AG04450 (cell line): ENCODE measurements at regions of chr20 and their contacts with region 1.

Region 1: DNA sequence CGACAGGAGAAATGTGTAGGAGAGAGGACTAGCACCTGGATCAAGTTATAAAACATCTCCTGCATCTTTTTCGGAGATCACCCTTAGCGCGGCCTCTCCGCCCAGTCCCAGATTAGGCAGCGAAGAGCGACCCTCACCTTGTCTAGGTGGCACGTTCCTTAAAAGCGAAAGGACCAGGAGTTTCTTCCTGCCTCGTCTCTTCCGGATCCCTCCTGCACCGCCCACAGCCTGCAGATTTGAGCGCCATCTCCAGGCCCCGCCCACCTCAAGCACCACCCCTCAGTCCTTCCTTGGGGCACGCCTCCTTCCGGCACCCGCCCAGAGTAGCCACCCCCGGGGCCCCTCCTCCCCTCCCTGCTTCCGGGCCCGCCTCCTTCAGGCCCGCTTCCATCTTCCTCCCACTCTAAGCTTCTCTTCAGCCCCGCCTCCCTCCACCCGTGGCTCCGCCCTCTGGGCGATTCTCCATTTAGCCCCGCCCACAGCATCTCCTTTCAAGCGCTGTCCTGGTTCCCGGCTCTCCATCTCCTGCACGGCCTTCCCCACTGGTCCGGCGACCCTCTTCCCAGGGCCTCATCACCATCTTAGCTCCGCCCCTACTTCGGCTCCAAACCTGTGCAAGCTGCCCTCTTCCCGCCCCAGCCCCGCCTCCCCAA is 662 bp upstream of the RALY start:
- DNase-seq: peak; percentile 99
- H3K4me3 ChIP-seq: peak overlapping the region; percentile 93
- H3K27ac ChIP-seq: peak overlapping the region; percentile 95
- H3K27me3 ChIP-seq: no peaks in the 10 kb centered on the region
- CTCF ChIP-seq: no peak

Region 2: GRCh38 chr20:33810885-33811777 is 181.9 kb before region 1 on chr20 and contains the start of gene CHMP4B:
- CTCF ChIA-PET with region 1: no interaction called
- POLR2A ChIA-PET with region 1: interaction called, 11 read pairs
- DNase-seq: peak; percentile 95
- H3K4me3 ChIP-seq: peak within 1 kb of the TSS; percentile 99
- H3K27ac ChIP-seq: peak within 1 kb of the TSS; percentile 100
- H3K27me3 ChIP-seq: no peaks in the 10 kb centered on the region
- CTCF ChIP-seq: no peak
- polyA plus RNA-seq, gene CHMP4B: 92.4 and 97.4 TPM in 2 replicates

Region 3: DNA sequence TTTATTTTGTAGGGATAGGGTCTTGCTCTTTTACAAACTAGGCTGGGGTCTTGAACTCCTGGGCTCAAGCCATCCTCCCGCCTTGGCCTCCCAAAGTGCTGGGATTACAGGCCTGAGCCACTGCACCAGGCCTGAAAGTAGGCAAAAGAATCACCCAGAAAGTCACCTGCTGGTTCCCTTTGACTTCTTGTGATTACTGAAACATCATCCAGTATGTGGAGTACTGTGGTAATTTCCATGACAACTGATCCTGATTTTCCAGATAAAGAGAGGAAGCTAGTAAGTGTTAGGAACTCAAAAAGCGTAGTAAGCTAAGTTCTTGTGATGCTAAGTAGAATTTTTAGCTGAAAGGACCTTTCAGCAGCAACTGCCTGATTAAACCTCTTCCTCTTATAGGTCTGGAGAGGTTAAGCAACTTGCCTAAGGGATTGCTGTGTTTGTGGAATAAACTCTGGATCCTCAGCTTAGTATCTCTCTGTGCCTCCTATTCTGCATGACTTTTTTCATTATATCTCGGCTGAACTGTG is 17.4 kb after region 1 on chr20:
- CTCF ChIA-PET with region 1: no interaction called
- POLR2A ChIA-PET with region 1: interaction called, 20 read pairs
- DNase-seq: no peak
- H3K4me3 ChIP-seq: no peak overlapping the region
- H3K27ac ChIP-seq: no peak overlapping the region
- H3K27me3 ChIP-seq: no peaks in the 10 kb centered on the region
- CTCF ChIP-seq: no peak

Region 4: DNA sequence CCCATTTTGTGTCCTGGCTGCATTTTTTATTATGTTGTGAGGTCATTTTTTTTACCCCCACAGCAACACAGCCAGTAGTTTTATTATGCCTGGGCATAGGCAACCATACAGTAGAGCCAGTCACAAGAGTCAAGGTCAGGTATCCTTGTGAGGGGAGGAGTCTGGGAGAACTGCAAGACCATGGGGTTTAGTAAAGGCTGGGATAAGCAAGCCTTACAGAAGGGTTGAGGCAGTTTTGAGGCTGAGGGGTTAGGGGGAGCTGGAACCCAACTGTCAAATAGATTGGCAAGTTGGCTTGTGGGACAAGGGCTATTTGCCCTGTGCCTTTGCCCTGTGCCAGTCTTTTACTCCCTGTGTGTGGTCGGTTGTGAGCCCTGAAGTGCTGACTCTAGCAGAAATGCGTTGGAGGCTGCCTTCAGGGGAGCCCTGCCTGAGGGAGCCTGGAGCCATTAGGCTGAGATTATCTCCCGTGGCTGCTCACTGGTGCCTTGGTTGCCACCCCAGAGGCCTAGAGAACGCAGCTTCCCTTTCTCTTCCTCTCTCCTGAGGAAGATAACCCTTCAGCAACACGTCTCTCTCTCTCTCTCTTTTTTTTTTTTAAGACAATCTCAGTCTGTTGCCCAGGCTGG is 31.8 kb after region 1 on chr20:
- CTCF ChIA-PET with region 1: no interaction called
- POLR2A ChIA-PET with region 1: interaction called, 16 read pairs
- DNase-seq: no peak
- H3K4me3 ChIP-seq: no peak overlapping the region
- H3K27ac ChIP-seq: no peak overlapping the region
- H3K27me3 ChIP-seq: no peaks in the 10 kb centered on the region
- CTCF ChIP-seq: no peak

Region 5: DNA sequence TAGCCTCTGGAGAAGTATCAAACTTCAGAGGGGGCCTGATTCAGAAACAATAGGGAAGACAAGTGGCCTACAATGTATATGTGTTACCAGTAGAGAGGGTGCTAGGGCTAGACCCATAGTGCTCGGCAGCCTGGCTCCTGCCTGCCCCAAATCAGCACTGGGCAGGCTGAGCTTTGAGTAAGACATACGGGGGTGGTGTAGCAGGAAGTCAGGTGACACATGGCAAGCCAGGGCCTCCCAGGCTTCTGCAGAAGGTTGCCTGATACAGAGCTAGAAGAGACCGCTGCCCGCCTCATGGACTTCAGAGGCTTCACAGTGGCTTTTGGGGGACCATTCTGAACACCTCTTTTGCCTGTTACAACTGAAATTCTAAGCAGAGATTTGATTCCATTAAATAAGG is 44.1 kb after region 1 on chr20:
- CTCF ChIA-PET with region 1: no interaction called
- POLR2A ChIA-PET with region 1: interaction called, 21 read pairs
- DNase-seq: no peak
- H3K4me3 ChIP-seq: no peak overlapping the region
- H3K27ac ChIP-seq: no peak overlapping the region
- H3K27me3 ChIP-seq: no peaks in the 10 kb centered on the region
- CTCF ChIP-seq: no peak

Region 6: GRCh38 chr20:34069341-34070078 is 76.5 kb after region 1 on chr20:
- CTCF ChIA-PET with region 1: interaction called, 4 read pairs
- POLR2A ChIA-PET with region 1: interaction called, 13 read pairs
- DNase-seq: peak; percentile 69
- H3K4me3 ChIP-seq: no peak overlapping the region
- H3K27ac ChIP-seq: no peak overlapping the region
- H3K27me3 ChIP-seq: no peaks in the 10 kb centered on the region
- CTCF ChIP-seq: peak; percentile 92

Region 7: DNA sequence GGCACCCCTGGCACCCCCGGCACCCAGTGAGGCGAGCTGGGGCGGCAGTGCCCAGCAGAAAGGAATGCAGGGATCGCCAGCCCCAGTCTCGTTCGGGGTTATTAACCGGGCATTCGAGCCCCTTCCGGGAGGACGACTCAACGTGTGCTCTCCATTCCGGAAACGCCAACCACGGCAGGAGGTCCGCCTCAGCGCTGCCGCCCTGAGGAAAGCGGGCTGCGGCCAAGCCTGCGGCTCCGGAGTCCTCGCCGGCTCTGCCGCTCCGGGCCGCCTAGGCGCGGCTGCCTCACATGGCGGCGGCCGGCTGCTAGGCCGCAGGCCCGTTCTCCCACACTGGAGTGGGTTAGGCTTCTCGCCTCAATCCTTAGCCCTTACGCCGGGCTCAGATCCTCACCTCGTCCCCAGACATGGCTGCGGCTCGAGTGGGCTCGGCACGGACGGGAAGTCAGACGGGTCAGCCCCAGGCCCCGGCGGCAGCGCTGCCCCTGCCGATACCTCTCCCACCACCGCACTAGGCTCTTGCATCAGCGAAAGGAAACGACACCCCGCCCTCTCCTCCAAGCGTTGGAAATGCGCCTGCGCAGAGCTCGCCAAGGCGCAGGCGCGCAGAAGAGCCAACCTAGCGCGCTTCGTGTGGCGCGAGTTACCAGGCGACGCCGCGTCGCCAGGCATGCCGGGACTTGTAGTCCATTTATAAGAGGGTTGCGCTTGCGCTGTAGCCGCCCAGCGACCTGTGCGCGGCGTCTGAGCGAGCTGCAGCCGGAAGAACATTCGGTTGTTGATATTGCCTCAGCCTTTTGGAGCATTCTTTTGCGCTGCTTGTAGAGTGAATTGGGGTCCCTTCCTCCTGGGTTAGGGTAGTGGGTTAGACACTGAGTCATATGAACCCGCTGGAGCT is 118.9 kb after region 1 on chr20 and contains the start of gene EIF2S2:
- CTCF ChIA-PET with region 1: no interaction called
- POLR2A ChIA-PET with region 1: interaction called, 19 read pairs
- DNase-seq: peak; percentile 99
- H3K4me3 ChIP-seq: peak within 1 kb of the TSS; percentile 94
- H3K27ac ChIP-seq: peak within 1 kb of the TSS; percentile 96
- H3K27me3 ChIP-seq: no peaks in the 10 kb centered on the region
- CTCF ChIP-seq: no peak
- polyA plus RNA-seq, gene EIF2S2: 119 and 161 TPM in 2 replicates